IMR-90 (cell line): ENCODE measurements at regions of chr15 and their contacts with region 1.

Region 1: GRCh38 chr15:87816811-87817210 is 439.7 kb downstream of the NTRK3 start:
- DNase-seq: peak; percentile 99
- ATAC-seq: peak; percentile 96
- H3K4me3 ChIP-seq: no peak overlapping the region
- H3K27ac ChIP-seq: peak overlapping the region; percentile 65
- H3K4me1 ChIP-seq: peaks cover 10% of the 10 kb centered on the region
- H3K27me3 ChIP-seq: no peaks in the 10 kb centered on the region
- CTCF ChIP-seq: no peak
- POLR2A ChIP-seq: no peak
- RAD21 ChIP-seq: peak; percentile 30; the same call in 1 of the 2 replicates

Region 2: GRCh38 chr15:87369269-87369668 is 447.5 kb before region 1 on chr15:
- CTCF ChIA-PET with region 1: no interaction called
- POLR2A ChIA-PET with region 1: no interaction called
- dilution Hi-C with region 1: no loop called
- in situ Hi-C with region 1: no loop called
- intact Hi-C with region 1: loop called (anchors 1 kb)
- DNase-seq: peak; percentile 93
- ATAC-seq: peak; percentile 89
- H3K4me3 ChIP-seq: no peak overlapping the region
- H3K27ac ChIP-seq: no peak overlapping the region
- H3K4me1 ChIP-seq: peaks cover 6% of the 10 kb centered on the region
- H3K27me3 ChIP-seq: no peaks in the 10 kb centered on the region
- CTCF ChIP-seq: no peak
- POLR2A ChIP-seq: no peak
- RAD21 ChIP-seq: no peak

Region 3: GRCh38 chr15:87752250-87752951 is 64.4 kb before region 1 on chr15:
- CTCF ChIA-PET with region 1: no interaction called
- POLR2A ChIA-PET with region 1: no interaction called
- dilution Hi-C with region 1: no loop called
- in situ Hi-C with region 1: no loop called
- intact Hi-C with region 1: loop called (anchors 5 kb)
- DNase-seq: peak; percentile 93
- ATAC-seq: peak; percentile 84
- H3K4me3 ChIP-seq: no peak overlapping the region
- H3K27ac ChIP-seq: peak overlapping the region; percentile 45; the same call in 1 of the 2 replicates
- H3K4me1 ChIP-seq: peaks cover 14% of the 10 kb centered on the region
- H3K27me3 ChIP-seq: no peaks in the 10 kb centered on the region
- CTCF ChIP-seq: no peak
- POLR2A ChIP-seq: no peak
- RAD21 ChIP-seq: no peak

Region 4: DNA sequence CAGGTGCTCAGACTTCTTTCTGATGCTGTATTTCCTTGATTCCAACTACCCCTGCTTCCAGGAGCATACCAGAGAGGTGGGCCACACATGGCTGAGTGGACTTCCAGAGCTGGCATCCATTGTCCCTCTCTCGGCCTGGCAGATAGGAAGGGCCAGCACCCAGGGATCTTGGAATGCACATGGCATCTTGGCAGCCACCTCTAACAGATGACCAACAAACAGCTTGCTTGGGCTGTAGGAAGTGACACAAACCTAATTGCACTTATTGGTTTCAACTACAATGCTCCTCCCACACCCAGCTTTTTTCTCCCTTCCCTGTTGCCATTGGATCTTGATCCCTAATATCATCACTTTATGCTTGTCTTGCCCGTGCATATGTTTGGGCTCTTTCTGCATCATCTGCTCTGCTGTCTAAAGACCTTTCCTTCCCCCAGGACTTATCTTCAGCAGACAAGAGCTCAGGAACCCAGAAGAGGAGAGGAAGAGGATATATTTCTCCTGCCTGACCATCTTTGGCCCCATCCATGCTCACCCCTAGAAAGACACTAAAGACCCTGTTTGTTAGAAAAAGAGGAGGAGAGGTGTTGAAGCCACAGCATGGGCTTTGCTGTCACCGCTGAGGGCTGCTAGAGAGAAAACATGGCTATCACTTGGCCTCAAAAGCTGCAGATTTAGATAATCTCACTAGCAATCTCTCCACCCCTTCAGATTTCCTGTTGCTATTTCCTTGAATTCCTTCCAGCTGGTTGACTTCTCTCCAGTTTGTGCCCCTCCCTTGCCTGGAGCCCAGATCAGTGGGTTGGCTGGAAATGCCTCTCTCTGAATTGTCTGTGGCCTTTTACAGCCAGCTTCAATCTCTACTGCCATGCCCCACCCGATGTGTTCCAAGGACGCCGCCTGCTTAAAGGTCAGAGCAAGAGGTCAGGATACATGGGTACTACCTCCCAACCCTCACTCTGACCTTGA is 145.3 kb after region 1 on chr15:
- CTCF ChIA-PET with region 1: no interaction called
- POLR2A ChIA-PET with region 1: no interaction called
- dilution Hi-C with region 1: no loop called
- in situ Hi-C with region 1: no loop called
- intact Hi-C with region 1: no loop called
- DNase-seq: no peak
- ATAC-seq: no peak
- H3K4me3 ChIP-seq: no peak overlapping the region
- H3K27ac ChIP-seq: no peak overlapping the region
- H3K4me1 ChIP-seq: no peaks in the 10 kb centered on the region
- H3K27me3 ChIP-seq: no peaks in the 10 kb centered on the region
- CTCF ChIP-seq: no peak
- POLR2A ChIP-seq: no peak
- RAD21 ChIP-seq: no peak

Region 5: DNA sequence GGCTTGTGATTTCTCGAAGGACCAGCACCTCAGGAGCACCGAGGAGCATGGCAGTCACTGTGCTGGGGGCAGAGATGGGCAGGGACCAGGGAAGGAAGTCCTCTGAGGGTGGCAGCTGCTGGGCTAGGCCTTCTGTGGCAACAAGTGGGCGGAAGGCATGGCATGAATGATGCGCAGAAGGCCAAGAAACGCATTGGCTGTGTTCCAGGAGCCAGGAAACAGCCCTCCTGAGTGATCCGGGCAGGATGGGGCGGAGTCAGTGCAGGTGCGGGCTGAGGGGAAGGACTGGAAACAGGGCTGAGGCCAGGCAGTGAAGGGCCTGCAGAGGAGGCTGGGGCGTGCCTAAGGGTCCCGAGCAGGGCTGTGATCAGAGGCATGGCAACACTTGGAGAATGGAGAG is 674.3 kb after region 1 on chr15:
- CTCF ChIA-PET with region 1: no interaction called
- POLR2A ChIA-PET with region 1: interaction called, 11 read pairs
- dilution Hi-C with region 1: no loop called
- in situ Hi-C with region 1: no loop called
- intact Hi-C with region 1: no loop called
- DNase-seq: no peak
- ATAC-seq: no peak
- H3K4me3 ChIP-seq: no peak overlapping the region
- H3K27ac ChIP-seq: no peak overlapping the region
- H3K4me1 ChIP-seq: no peaks in the 10 kb centered on the region
- H3K27me3 ChIP-seq: no peaks in the 10 kb centered on the region
- CTCF ChIP-seq: no peak
- POLR2A ChIP-seq: no peak
- RAD21 ChIP-seq: no peak